ENCODE measurements at regions of chr14 and their contacts with region 1.

Region 1: DNA sequence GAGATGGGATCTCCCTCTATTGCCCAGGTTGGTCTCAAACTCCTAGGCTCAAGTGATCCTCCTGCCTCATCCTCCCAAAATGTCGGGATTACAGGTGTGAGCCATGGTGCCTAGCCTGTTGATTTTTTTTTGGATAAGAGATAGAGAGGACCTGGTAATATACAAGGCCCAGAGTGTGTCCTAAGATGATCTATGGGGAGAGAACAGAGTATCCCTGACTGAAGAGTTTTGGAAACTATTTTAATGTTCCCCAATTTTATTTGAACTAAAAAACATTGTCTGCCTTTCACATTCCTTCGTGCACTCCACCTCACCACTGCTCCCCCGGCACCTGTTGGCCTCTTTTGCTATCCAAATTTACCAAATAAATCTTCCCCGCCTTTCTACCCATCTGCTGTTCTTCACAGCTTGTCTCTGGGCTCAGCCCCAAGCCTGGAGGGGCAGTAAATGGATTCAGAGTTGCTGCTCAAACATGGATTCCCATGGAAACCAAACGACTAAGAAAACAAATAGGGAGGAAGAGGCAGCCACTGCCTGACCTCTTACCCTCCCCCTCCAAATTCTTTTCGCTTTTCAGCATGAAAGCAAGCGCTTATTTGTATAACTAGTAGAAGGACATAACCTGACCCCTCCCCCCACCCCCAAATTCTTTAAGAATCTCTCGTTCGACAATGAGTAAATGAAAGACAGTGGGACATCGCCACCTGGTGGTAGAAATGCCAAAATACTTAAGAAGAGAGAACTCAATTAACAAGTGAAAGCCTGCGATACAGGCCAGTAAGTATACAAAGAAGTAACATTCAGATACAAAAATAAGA is 22.6 kb downstream of the OR10G3 start:
- DNase-seq: peak; percentile 76
- H3K4me3 Mint-ChIP-seq: no peak overlapping the region
- H3K27ac Mint-ChIP-seq: peak overlapping the region; percentile 16
- H3K4me1 Mint-ChIP-seq: peaks cover 5% of the 10 kb centered on the region
- H3K27me3 Mint-ChIP-seq: no peaks in the 10 kb centered on the region

Region 2: GRCh38 chr14:21437063-21437901 is 120.0 kb before region 1 on chr14:
- CTCF ChIA-PET with region 1: no interaction called
- POLR2A ChIA-PET with region 1: no interaction called
- intact Hi-C with region 1: loop called (anchors 1 kb)
- DNase-seq: peak; percentile 99
- H3K4me3 Mint-ChIP-seq: peak overlapping the region; percentile 80
- H3K27ac Mint-ChIP-seq: peak overlapping the region; percentile 71
- H3K4me1 Mint-ChIP-seq: peaks cover 52% of the 10 kb centered on the region
- H3K27me3 Mint-ChIP-seq: no peaks in the 10 kb centered on the region